ENCODE measurements at regions of chr12 and their contacts with region 1.

Region 1: DNA sequence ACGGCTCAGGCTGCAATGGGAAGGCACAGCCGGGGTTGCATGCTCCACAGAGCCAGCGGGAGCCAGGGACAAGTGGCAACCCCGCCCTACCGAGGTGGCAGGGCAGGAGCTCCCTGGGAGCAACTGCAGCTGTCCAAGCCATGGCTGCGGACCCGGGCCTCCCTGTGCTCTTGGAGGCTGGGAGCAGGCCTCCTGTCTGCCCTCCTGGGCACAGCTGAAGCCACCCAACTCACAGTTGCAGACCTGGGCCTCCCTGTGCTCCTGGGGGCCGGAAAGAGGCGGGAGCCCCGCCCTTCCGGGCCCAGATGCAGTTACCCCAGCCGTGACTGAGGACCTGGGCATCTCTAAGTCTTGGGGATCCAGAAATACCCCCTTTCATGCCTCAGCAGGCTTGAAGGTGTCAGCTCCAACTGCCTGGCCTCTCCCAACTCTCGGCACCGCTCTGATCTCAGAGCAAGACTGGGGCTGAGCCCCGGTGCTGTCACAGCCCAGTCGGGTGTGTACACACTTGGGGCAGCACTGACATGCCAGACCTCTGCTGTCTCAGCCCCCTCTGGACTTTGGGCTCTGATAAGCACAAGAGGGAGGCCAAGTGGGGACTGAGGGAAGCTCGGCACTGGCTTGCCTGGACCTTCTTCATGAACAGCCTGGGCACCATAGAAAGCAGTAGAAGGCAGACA is 7.5 kb upstream of the RASSF9 start:
- DNase-seq: no peak
- H3K4me3 ChIP-seq: no peak overlapping the region
- H3K27ac ChIP-seq: no peak overlapping the region
- H3K4me1 ChIP-seq: peaks cover 0 to 3% (median 0%) of the 10 kb centered on the region in 4 experiments; a peak in 1 of 7 replicates
- H3K27me3 ChIP-seq: no peaks in the 10 kb centered on the region
- CTCF ChIP-seq: no peak
- EP300 ChIP-seq: no peak
- POLR2A ChIP-seq: no peak
- RAD21 ChIP-seq: no peak

Region 2: GRCh38 chr12:85781766-85782165 is 62.0 kb before region 1 on chr12:
- CTCF ChIA-PET with region 1: no interaction called
- POLR2A ChIA-PET with region 1: no interaction called
- DNase-seq: no peak
- H3K4me3 ChIP-seq: no peak overlapping the region
- H3K27ac ChIP-seq: no peak overlapping the region
- H3K4me1 ChIP-seq: peaks cover 0 to 11% (median 1%) of the 10 kb centered on the region in 4 experiments; a peak in 1 of 7 replicates
- H3K27me3 ChIP-seq: no peaks in the 10 kb centered on the region
- CTCF ChIP-seq: no peak
- EP300 ChIP-seq: no peak
- POLR2A ChIP-seq: no peak
- RAD21 ChIP-seq: no peak

Region 3: GRCh38 chr12:85855305-85855704 is 11.6 kb after region 1 on chr12:
- CTCF ChIA-PET with region 1: interaction called, 23 read pairs
- POLR2A ChIA-PET with region 1: no interaction called
- DNase-seq: no peak
- H3K4me3 ChIP-seq: no peak overlapping the region
- H3K27ac ChIP-seq: no peak overlapping the region
- H3K4me1 ChIP-seq: no peaks in the 10 kb centered on the region
- H3K27me3 ChIP-seq: no peaks in the 10 kb centered on the region
- CTCF ChIP-seq: no peak
- EP300 ChIP-seq: no peak
- POLR2A ChIP-seq: no peak
- RAD21 ChIP-seq: no peak